ENCODE measurements at regions of chr1 and their contacts with region 1.

Region 1: DNA sequence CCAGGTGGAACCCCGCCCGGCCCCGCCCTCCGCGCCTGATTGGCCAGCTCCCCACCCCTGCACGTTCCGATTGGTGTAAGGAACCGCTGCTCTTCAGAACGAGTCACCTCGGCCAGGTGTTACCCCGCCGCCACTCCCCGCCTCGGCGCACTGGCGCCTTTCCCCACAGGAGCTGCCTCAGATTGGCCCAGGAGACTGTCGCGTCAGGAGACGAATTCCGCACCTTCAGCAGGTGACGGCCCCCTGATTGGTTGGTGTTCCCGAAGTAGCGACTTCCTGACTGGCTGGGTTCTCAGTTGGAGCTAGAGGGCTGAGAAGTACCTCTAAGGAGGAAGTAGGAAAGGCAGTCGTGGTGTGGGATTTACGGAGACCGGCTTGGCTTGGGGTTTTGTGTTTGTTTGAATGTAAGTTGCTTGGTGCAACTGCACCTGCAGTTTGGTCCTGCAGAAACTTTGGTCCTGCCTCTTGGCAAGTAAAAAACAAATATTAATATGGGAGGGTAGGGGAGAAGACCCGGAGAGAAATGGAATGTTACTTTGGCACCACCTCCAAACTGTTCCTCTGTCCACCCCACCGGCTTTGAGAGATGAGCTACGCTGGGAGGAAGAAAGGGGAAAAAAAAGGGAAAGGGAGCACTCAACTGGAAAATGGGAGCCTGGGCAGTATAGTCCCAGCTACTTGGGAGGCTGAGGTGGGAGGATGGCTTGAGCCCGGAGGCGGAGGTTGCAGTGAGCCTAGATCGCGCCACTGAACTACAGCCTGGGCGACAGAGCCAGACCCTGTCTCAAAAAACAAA is 411 bp upstream of the F11R start:
- DNase-seq: no peak
- ATAC-seq: peak; percentile 94
- H3K4me3 ChIP-seq: peak overlapping the region; percentile 87 to 97
- H3K27ac ChIP-seq: peak overlapping the region; percentile 67
- H3K4me1 ChIP-seq: peaks cover 27% of the 10 kb centered on the region
- H3K27me3 ChIP-seq: no peaks in the 10 kb centered on the region
- CTCF ChIP-seq: no peak

Region 2: GRCh38 chr1:161038523-161039153 is 17.3 kb after region 1 on chr1 and contains the start of gene TSTD1:
- CTCF ChIA-PET with region 1: interaction called, 7 read pairs
- POLR2A ChIA-PET with region 1: interaction called, 12 read pairs
- in situ Hi-C with region 1: no loop called
- intact Hi-C with region 1: no loop called
- DNase-seq: no peak
- ATAC-seq: peak; percentile 92
- H3K4me3 ChIP-seq: peak within 1 kb of the TSS; percentile 68 to 84
- H3K27ac ChIP-seq: peak within 1 kb of the TSS; percentile 70
- H3K4me1 ChIP-seq: peaks cover 12% of the 10 kb centered on the region
- H3K27me3 ChIP-seq: no peaks in the 10 kb centered on the region
- CTCF ChIP-seq: no peak
- total RNA-seq, gene TSTD1: 20.1 TPM

Region 3: DNA sequence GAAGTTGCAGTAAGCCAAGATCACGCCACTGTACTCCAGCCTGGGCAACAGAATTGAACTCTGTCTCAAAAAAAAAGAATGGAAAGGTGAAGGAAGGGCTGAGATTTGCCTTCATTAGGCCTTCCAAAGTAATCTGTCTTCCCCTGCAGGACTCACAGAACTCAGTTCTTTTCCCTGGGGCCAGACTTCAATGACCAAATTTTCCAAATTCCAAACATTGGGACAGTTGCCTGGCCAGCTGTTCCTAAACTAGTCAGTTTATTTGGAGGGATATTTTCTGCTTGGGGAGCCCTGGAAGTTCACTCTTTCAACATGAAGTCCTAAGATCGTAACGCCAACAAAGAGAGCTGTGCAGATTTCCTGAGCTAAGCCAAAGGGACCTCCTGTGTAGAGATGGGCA is 116.5 kb after region 1 on chr1:
- CTCF ChIA-PET with region 1: no interaction called
- POLR2A ChIA-PET with region 1: no interaction called
- in situ Hi-C with region 1: no loop called
- intact Hi-C with region 1: no loop called
- DNase-seq: no peak
- ATAC-seq: no peak
- H3K4me3 ChIP-seq: no peak overlapping the region
- H3K27ac ChIP-seq: no peak overlapping the region
- H3K4me1 ChIP-seq: no peaks in the 10 kb centered on the region
- H3K27me3 ChIP-seq: no peaks in the 10 kb centered on the region
- CTCF ChIP-seq: no peak